ENCODE measurements at regions of chr1 and their contacts with region 1.

Region 1: GRCh38 chr1:119968068-119968492 is 71.8 kb upstream of the ADAM30 start:
- DNase-seq: peak; percentile 63
- ATAC-seq: peak; percentile 97
- H3K4me3 ChIP-seq: no peak overlapping the region
- H3K27ac ChIP-seq: no peak overlapping the region
- H3K4me1 ChIP-seq: peaks cover 4% of the 10 kb centered on the region
- H3K27me3 ChIP-seq: no peaks in the 10 kb centered on the region
- CTCF ChIP-seq: peak; percentile 92
- EP300 ChIP-seq: no peak
- POLR2A ChIP-seq: no peak
- RAD21 ChIP-seq: peak; percentile 71

Region 2: DNA sequence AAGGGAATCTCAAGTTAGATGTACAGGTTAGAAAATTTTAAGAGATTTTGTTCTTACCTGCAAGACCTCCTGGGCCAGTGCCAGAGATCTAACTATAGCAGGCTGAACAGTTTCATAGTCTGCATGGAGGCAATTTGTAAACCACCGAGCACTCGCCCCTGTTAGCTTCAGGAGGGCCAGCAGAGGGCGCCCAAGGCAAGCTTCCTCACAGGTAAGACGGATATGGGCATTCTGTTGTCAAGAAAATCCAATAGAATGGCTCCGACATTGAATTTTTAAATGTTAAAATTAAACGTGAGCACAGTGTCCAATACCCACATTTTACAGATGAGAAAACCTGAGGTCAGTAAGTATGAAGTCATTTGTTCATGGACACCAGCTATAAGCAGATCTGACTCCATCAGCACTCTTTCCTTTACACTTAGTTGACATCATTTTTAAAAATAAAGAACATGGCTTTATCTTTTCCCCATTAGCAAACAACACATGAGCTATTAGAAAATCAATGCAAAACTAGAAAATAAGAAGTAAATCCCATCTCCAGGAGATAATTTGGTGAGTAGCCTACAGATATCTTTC is 159.0 kb before region 1 on chr1:
- CTCF ChIA-PET with region 1: no interaction called
- POLR2A ChIA-PET with region 1: no interaction called
- in situ Hi-C with region 1: no loop called
- intact Hi-C with region 1: loop called (anchors 10 kb)
- DNase-seq: peak; percentile 47
- ATAC-seq: peak; percentile 92
- H3K4me3 ChIP-seq: no peak overlapping the region
- H3K27ac ChIP-seq: no peak overlapping the region
- H3K4me1 ChIP-seq: peaks cover 35% of the 10 kb centered on the region
- H3K27me3 ChIP-seq: peaks cover 3 to 7% of the 10 kb centered on the region in 2 experiments; a peak in 2 of 5 replicates
- CTCF ChIP-seq: peak; percentile 85
- EP300 ChIP-seq: no peak
- POLR2A ChIP-seq: no peak
- RAD21 ChIP-seq: peak; percentile 76

Region 3: GRCh38 chr1:119870917-119871596 is 97.0 kb before region 1 on chr1:
- CTCF ChIA-PET with region 1: interaction called, 7 read pairs
- POLR2A ChIA-PET with region 1: no interaction called
- in situ Hi-C with region 1: loop called (anchors 10 kb)
- intact Hi-C with region 1: loop called (anchors 1 kb)
- DNase-seq: peak; percentile 62
- ATAC-seq: peak; percentile 97
- H3K4me3 ChIP-seq: peak overlapping the region; percentile 51 to 71 (median 65); a peak in 5 of 6 replicates
- H3K27ac ChIP-seq: no peak overlapping the region
- H3K4me1 ChIP-seq: peaks cover 8% of the 10 kb centered on the region
- H3K27me3 ChIP-seq: 0 out of 5 replicates have a peak, but pooled peaks cover 1 to 8% of the 10 kb centered on the region in 2 experiments
- CTCF ChIP-seq: peak; percentile 90
- EP300 ChIP-seq: no peak
- POLR2A ChIP-seq: no peak
- RAD21 ChIP-seq: peak; percentile 89

Region 4: GRCh38 chr1:119885903-119886783 is 81.9 kb before region 1 on chr1:
- CTCF ChIA-PET with region 1: interaction called, 11 read pairs
- POLR2A ChIA-PET with region 1: no interaction called
- in situ Hi-C with region 1: no loop called
- intact Hi-C with region 1: no loop called
- DNase-seq: peak; percentile 37
- ATAC-seq: peak; percentile 91
- H3K4me3 ChIP-seq: no peak overlapping the region
- H3K27ac ChIP-seq: no peak overlapping the region
- H3K4me1 ChIP-seq: no peaks in the 10 kb centered on the region
- H3K27me3 ChIP-seq: peaks cover 0 to 9% of the 10 kb centered on the region in 2 experiments; a peak in 3 of 5 replicates
- CTCF ChIP-seq: peak; percentile 80
- EP300 ChIP-seq: no peak
- POLR2A ChIP-seq: no peak
- RAD21 ChIP-seq: peak; percentile 43; the same call in 1 of the 2 replicates

Region 5: GRCh38 chr1:119917304-119918055 is 50.6 kb before region 1 on chr1:
- CTCF ChIA-PET with region 1: no interaction called
- POLR2A ChIA-PET with region 1: no interaction called
- in situ Hi-C with region 1: no loop called
- intact Hi-C with region 1: no loop called
- DNase-seq: no peak
- ATAC-seq: no peak
- H3K4me3 ChIP-seq: no peak overlapping the region
- H3K27ac ChIP-seq: no peak overlapping the region
- H3K4me1 ChIP-seq: no peaks in the 10 kb centered on the region
- H3K27me3 ChIP-seq: no peaks in the 10 kb centered on the region
- CTCF ChIP-seq: no peak
- EP300 ChIP-seq: no peak
- POLR2A ChIP-seq: no peak
- RAD21 ChIP-seq: no peak

Region 6: DNA sequence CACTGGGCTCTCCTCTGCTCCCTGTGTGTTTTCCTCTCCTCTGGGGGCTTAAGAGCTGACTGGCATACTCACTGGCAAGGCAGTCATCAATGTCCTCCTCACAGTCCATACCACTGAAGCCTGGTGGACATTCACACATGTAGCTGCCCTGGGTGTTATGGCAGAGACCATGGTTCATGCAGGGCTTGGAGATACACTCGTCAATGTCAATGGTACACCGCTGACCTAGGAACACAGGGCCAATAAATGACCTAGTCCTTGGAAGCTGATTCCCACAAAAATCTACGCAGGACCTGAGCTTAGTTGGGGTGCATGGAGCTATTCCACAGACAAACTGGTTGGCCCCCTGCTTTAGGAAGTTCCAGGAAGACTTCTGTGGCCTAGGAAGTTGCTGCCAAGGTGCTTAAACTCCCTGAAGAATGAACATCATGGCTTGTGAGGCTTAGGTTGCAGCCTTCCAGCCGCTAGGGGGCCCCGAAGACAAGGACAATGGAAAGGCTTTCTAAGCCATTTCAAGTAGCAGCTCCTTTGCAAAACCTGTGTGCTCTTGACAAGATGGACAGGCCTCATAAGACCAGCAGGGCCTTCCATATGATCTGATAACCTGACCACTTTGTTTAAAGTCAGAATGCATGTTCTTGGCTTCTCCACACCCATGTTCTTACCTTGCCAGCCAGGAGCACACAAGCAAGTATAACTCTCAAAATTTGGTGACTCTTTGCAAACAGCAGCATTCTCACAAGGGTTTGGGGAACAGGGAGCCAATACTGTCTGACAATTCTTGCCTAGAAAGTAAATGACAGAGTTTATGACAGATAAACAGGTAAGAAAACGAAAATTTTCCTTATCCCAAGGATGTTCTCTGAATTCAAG is 19.5 kb before region 1 on chr1:
- CTCF ChIA-PET with region 1: interaction called, 18 read pairs
- POLR2A ChIA-PET with region 1: no interaction called
- in situ Hi-C with region 1: no loop called
- intact Hi-C with region 1: loop called (anchors 1 kb)
- DNase-seq: peak; percentile 45
- ATAC-seq: peak; percentile 89
- H3K4me3 ChIP-seq: no peak overlapping the region
- H3K27ac ChIP-seq: no peak overlapping the region
- H3K4me1 ChIP-seq: no peaks in the 10 kb centered on the region
- H3K27me3 ChIP-seq: no peaks in the 10 kb centered on the region
- CTCF ChIP-seq: peak; percentile 88
- EP300 ChIP-seq: no peak
- POLR2A ChIP-seq: no peak
- RAD21 ChIP-seq: peak; percentile 84

Measured in HepG2 (cell line).